ENCODE measurements at regions of chr3 and their contacts with region 1.

Region 1: GRCh38 chr3:107421170-107421792 is 44.0 kb downstream of the CCDC54 start:
- DNase-seq: no peak
- H3K4me3 ChIP-seq: peak overlapping the region; percentile 47
- H3K27ac ChIP-seq: no peak overlapping the region
- H3K27me3 ChIP-seq: no peaks in the 10 kb centered on the region
- CTCF ChIP-seq: peak; percentile 69

Region 2: DNA sequence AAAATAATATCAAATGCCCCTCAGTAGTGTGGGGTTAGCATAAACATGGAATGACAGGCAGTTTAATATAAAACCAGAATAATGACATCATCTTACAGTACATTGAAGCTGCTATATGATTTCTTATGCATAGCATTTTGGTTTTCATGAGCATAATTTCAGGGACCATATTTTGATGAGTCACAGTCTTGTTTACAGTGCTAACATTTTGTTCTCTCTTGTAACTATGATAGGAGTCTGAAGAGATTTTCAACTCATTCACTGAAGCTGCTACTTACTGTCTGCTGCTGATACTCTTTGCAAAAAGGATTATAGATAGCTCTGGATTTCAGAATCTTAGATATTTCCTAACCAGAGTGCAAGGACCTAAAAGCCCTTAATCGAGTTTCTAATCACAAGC is 136.7 kb before region 1 on chr3:
- CTCF ChIA-PET with region 1: interaction called, 16 read pairs
- POLR2A ChIA-PET with region 1: no interaction called
- DNase-seq: no peak
- H3K4me3 ChIP-seq: no peak overlapping the region
- H3K27ac ChIP-seq: no peak overlapping the region
- H3K27me3 ChIP-seq: no peaks in the 10 kb centered on the region
- CTCF ChIP-seq: no peak

Region 3: GRCh38 chr3:107367353-107367752 is 53.9 kb before region 1 on chr3:
- CTCF ChIA-PET with region 1: interaction called, 23 read pairs
- POLR2A ChIA-PET with region 1: no interaction called
- DNase-seq: peak; percentile 57
- H3K4me3 ChIP-seq: no peak overlapping the region
- H3K27ac ChIP-seq: no peak overlapping the region
- H3K27me3 ChIP-seq: no peaks in the 10 kb centered on the region
- CTCF ChIP-seq: no peak

Region 4: GRCh38 chr3:107373896-107374295 is 47.4 kb before region 1 on chr3:
- CTCF ChIA-PET with region 1: interaction called, 23 read pairs
- POLR2A ChIA-PET with region 1: no interaction called
- DNase-seq: no peak
- H3K4me3 ChIP-seq: no peak overlapping the region
- H3K27ac ChIP-seq: no peak overlapping the region
- H3K27me3 ChIP-seq: no peaks in the 10 kb centered on the region
- CTCF ChIP-seq: no peak

Region 5: DNA sequence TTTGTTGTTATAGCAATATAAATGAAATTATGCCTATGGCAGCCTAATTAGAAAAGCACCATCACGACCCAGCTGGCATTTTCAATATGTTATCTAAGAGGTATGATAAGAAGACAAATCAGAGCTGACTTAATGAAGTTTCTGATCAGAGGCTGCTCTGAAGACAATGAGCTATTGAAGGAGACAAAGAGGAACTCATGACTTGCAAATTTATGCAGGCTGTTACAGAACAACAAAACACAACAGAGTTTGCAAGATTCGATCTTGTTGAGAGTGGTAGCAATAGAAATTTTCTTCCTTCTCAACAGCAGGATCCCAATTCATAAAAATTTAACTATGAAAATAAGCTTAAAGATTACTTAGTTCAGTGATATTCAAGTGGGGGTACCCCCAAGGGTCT is 36.4 kb before region 1 on chr3:
- CTCF ChIA-PET with region 1: interaction called, 20 read pairs
- POLR2A ChIA-PET with region 1: no interaction called
- DNase-seq: no peak
- H3K4me3 ChIP-seq: no peak overlapping the region
- H3K27ac ChIP-seq: no peak overlapping the region
- H3K27me3 ChIP-seq: no peaks in the 10 kb centered on the region
- CTCF ChIP-seq: no peak

Region 6: GRCh38 chr3:107404727-107405469 is 16.4 kb before region 1 on chr3:
- CTCF ChIA-PET with region 1: interaction called, 76 read pairs
- POLR2A ChIA-PET with region 1: no interaction called
- DNase-seq: no peak
- H3K4me3 ChIP-seq: no peak overlapping the region
- H3K27ac ChIP-seq: no peak overlapping the region
- H3K27me3 ChIP-seq: no peaks in the 10 kb centered on the region
- CTCF ChIP-seq: no peak

Region 7: DNA sequence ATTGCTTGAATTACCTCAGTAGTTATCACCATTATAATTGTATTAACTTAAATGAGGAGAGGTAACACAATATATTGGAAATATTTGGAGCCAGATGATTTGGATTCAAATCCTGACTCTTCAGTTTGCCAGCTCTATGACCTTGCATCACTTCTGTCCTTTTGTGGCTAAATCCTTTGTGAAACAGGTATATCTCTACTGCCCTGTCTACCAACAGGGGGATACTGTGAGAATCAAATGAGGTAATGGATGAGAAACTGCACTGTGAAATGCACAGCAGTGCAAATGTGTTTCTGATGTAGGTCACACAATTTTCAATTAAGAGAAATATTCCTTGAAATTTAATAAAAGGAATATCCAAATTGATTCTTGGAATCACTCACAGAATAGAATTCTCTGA is 14.7 kb after region 1 on chr3:
- CTCF ChIA-PET with region 1: interaction called, 95 read pairs
- POLR2A ChIA-PET with region 1: no interaction called
- DNase-seq: no peak
- H3K4me3 ChIP-seq: no peak overlapping the region
- H3K27ac ChIP-seq: no peak overlapping the region
- H3K27me3 ChIP-seq: no peaks in the 10 kb centered on the region
- CTCF ChIP-seq: no peak

Measured in AG04450 (cell line).